ENCODE measurements at regions of chr9 and their contacts with region 1.

Region 1: GRCh38 chr9:32992595-32993238 is 8.7 kb downstream of the APTX start:
- DNase-seq: no peak
- H3K4me3 ChIP-seq: no peak overlapping the region
- H3K27ac ChIP-seq: no peak overlapping the region
- H3K4me1 ChIP-seq: no peaks in the 10 kb centered on the region
- H3K27me3 ChIP-seq: no peaks in the 10 kb centered on the region
- CTCF ChIP-seq: no peak
- POLR2A ChIP-seq: no peak

Region 2: DNA sequence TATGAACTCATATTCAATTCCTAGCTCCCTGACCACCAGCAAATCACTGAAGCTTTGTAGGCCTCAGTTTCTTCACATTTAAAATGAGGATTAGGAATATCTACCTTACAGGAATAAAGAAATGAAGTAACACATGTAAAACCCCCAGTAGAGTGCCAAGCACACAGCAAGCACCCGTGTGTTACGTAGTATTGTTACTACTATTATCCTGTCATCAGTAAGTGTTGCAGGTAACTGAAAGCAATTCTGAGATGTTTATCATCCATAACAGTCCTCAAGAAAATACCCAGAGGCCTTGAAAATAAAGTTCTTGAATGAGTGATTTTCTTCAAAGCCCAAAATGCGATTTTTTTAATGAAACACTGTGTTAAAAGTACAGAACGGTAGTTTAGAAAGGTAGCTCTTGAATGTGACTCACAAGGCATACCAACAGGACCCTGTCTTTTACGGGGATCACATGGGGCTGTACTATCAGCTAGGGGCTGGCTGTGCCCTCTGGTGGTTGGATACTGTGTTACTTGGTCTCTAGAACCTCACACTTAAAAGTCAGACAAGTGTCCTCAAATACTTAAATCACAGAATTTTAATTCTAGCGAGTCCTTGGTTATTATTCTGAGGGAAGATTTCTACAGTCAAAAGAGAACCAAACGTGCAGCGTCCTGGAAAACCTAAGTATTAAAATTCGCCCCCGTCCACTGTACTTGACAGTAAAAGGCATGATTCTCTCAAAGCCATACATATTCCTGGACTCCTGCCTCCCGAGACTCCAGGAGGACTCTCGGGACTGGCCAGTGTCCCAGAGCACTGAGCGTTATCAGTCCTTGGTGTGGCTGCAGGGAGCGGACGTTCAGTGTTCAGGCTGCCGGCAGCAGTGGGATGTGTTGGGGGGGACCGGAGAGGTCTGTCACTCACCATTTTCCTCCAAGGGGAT is 420.5 kb before region 1 on chr9:
- intact Hi-C with region 1: loop called (anchors 10 kb)
- DNase-seq: no peak
- H3K4me3 ChIP-seq: peak overlapping the region; percentile 60 to 76
- H3K27ac ChIP-seq: peak overlapping the region; percentile 83
- H3K4me1 ChIP-seq: peaks cover 24% of the 10 kb centered on the region
- H3K27me3 ChIP-seq: no peaks in the 10 kb centered on the region
- CTCF ChIP-seq: peak in 2 of 3 experiments; percentile 34 to 37
- POLR2A ChIP-seq: no peak

Measured in vagina (tissue), 2 donors.